HCT116 (cell line): ENCODE measurements at regions of chr12 and their contacts with region 1.

Region 1: DNA sequence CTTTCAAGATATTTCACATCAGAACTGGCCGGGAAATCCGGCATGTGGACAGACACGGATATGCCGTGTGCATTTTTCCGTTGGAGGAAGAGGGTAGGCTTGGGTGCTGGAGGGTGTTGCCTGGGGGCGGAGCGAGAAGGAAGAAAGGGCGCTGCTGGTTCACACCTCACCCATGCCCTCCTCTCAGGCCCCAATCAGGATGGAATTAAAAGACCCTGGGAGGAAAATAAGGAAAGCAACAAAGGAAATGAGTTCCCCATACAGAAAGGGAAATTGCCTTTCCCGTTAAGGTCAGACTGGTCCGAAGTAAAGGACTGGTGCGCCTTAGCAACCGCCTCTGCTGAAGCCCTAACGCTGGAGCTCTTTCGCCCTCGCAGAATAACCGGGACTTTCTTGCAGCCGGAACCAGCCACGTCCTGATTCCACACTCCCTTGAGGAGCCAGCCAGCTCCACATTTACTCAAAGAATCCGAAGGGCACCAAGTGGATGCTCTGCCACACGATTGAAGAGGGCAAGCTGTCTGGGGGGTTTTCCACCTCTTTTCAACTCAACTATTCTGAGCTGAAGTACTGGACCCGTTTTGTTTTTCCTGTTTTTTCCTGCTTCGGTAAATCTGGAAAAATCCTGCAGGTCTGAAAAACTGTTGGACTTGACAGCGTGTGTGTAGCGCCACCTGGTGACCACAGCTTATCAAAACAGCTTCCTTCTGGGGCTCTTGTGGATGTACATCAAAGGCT is 37.7 kb upstream of the BCL2L14 start:
- DNase-seq: peak; percentile 83
- ATAC-seq: peak; percentile 86
- H3K4me3 ChIP-seq: peak overlapping the region; percentile 11 to 13; a peak in 2 of 4 replicates
- H3K27ac ChIP-seq: no peak overlapping the region
- H3K4me1 ChIP-seq: peaks cover 0 to 6% of the 10 kb centered on the region in 2 experiments; a peak in 2 of 4 replicates
- H3K27me3 ChIP-seq: no peaks in the 10 kb centered on the region
- CTCF ChIP-seq: peak; percentile 81 to 91 (median 81)
- POLR2A ChIP-seq: no peak
- RAD21 ChIP-seq: peak; percentile 95

Region 2: DNA sequence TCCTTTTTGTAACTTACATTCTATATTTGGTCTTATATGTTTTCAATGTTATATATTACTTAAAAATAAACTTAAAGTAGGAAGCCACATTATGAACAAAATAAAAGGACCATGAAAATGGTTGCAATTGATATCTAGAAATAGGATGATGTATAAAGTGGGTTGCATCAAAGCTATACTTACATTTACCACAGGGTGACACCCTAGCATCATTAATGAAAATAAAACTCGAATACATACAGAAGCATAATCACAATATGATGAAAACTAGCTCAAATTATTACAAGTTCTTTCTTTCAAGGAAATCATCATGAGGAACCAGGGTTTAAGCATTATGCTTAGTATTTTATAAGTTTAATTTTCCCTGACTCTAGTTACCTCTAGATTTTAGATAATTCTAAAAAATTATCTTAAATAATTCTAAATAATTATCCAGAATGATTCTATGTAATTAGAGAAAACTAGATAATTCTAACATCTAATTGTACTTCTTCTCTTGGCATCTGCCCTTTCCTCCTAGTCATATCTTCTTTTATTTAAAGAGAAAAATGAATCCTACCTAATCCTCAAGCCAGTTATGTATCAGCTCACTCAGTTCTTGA is 1261.8 kb before region 1 on chr12:
- CTCF ChIA-PET with region 1: interaction called, 13 read pairs
- POLR2A ChIA-PET with region 1: no interaction called
- RAD21 ChIA-PET with region 1: interaction called in 1 of 2 experiments, 4 read pairs
- intact Hi-C with region 1: loop called (anchors 2 kb)
- DNase-seq: peak; percentile 26
- ATAC-seq: peak; percentile 68
- H3K4me3 ChIP-seq: no peak overlapping the region
- H3K27ac ChIP-seq: no peak overlapping the region
- H3K4me1 ChIP-seq: no peaks in the 10 kb centered on the region
- H3K27me3 ChIP-seq: peaks cover 29% of the 10 kb centered on the region
- CTCF ChIP-seq: peak; percentile 39 to 88 (median 71); a peak in 4 of 6 replicates
- POLR2A ChIP-seq: no peak
- RAD21 ChIP-seq: peak; percentile 85

Region 3: DNA sequence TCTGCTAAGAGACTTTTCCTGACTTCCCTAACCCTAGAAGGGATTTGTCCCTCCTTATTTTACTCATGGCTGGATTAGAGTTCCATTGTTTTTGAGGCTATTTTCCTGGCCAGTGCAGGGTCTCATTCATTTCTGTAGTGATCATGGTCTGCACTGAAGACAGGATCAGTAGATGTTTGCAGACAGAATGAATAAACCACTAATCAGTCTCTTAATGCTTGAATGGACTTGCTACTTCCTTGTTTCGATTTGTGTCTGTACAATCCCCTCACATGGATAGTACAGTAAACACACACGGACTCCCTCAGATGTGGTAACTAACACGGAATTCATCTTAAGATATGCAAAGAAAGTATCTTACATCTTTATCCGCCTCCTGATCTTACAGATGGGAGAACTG is 535.0 kb before region 1 on chr12:
- CTCF ChIA-PET with region 1: interaction called, 5 read pairs
- POLR2A ChIA-PET with region 1: no interaction called
- RAD21 ChIA-PET with region 1: no interaction called
- intact Hi-C with region 1: loop called (anchors 5 kb)
- DNase-seq: no peak
- ATAC-seq: no peak
- H3K4me3 ChIP-seq: no peak overlapping the region
- H3K27ac ChIP-seq: no peak overlapping the region
- H3K4me1 ChIP-seq: no peaks in the 10 kb centered on the region
- H3K27me3 ChIP-seq: peaks cover 19% of the 10 kb centered on the region; the same call in 1 of the 2 replicates
- CTCF ChIP-seq: no peak
- POLR2A ChIP-seq: no peak
- RAD21 ChIP-seq: no peak

Region 4: GRCh38 chr12:11553871-11554533 is 479.0 kb before region 1 on chr12:
- CTCF ChIA-PET with region 1: interaction called, 14 read pairs
- POLR2A ChIA-PET with region 1: no interaction called
- RAD21 ChIA-PET with region 1: interaction called in 1 of 2 experiments, 4 read pairs
- intact Hi-C with region 1: loop called (anchors 1 kb)
- DNase-seq: peak; percentile 56
- ATAC-seq: peak; percentile 88
- H3K4me3 ChIP-seq: no peak overlapping the region
- H3K27ac ChIP-seq: no peak overlapping the region
- H3K4me1 ChIP-seq: no peaks in the 10 kb centered on the region
- H3K27me3 ChIP-seq: peaks cover 44% of the 10 kb centered on the region
- CTCF ChIP-seq: peak; percentile 52 to 68 (median 64); a peak in 5 of 6 replicates
- POLR2A ChIP-seq: no peak
- RAD21 ChIP-seq: peak; percentile 61

Region 5: DNA sequence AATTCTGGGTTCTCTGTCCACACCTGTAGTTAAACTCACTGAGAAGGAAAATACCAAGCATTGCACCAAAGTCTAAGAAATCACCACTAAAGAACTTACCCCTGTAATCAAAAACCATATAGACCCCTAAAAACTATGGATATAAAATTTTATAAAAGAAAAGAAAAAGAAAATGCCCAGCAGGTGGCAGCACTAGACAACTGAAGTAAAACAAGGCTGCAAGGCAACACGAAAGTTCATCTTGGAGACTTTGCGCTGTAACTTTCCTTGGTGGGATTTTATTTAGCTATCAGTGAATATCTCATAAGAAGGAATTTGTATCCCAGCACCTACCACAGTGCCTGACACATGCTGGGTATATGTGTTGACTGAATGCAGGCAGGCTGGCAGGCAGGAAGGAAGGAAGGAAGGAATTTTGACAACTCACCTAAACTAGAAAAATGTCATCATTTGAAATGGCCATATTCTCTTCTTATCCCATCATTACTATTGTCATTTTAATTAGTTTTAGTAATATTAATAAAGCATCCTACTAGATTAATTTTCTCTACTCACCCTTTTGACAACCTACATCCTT is 451.8 kb before region 1 on chr12:
- CTCF ChIA-PET with region 1: interaction called, 88 read pairs
- POLR2A ChIA-PET with region 1: interaction called, 8 read pairs
- RAD21 ChIA-PET with region 1: interaction called, 8 read pairs
- intact Hi-C with region 1: loop called (anchors 1 kb)
- DNase-seq: peak; percentile 46
- ATAC-seq: peak; percentile 38; the same call in 1 of the 2 replicates
- H3K4me3 ChIP-seq: no peak overlapping the region
- H3K27ac ChIP-seq: no peak overlapping the region
- H3K4me1 ChIP-seq: peaks cover 0 to 2% of the 10 kb centered on the region in 2 experiments; a peak in 2 of 4 replicates
- H3K27me3 ChIP-seq: peaks cover 22% of the 10 kb centered on the region
- CTCF ChIP-seq: peak; percentile 18 to 80 (median 55); a peak in 4 of 6 replicates
- POLR2A ChIP-seq: no peak
- RAD21 ChIP-seq: peak; percentile 86

Region 6: GRCh38 chr12:11730299-11731041 is 302.6 kb before region 1 on chr12:
- CTCF ChIA-PET with region 1: no interaction called
- POLR2A ChIA-PET with region 1: no interaction called
- RAD21 ChIA-PET with region 1: no interaction called
- intact Hi-C with region 1: loop called (anchors 10 kb)
- DNase-seq: peak; percentile 12
- ATAC-seq: peak; percentile 63; the same call in 1 of the 2 replicates
- H3K4me3 ChIP-seq: no peak overlapping the region
- H3K27ac ChIP-seq: peak overlapping the region; percentile 48
- H3K4me1 ChIP-seq: peaks cover 33 to 34% of the 10 kb centered on the region in 2 experiments
- H3K27me3 ChIP-seq: no peaks in the 10 kb centered on the region
- CTCF ChIP-seq: no peak
- POLR2A ChIP-seq: no peak
- RAD21 ChIP-seq: no peak

Region 7: GRCh38 chr12:11922361-11922760 is 110.7 kb before region 1 on chr12:
- CTCF ChIA-PET with region 1: no interaction called
- POLR2A ChIA-PET with region 1: no interaction called
- RAD21 ChIA-PET with region 1: no interaction called
- intact Hi-C with region 1: no loop called
- DNase-seq: peak; percentile 24
- ATAC-seq: peak; percentile 50
- H3K4me3 ChIP-seq: no peak overlapping the region
- H3K27ac ChIP-seq: no peak overlapping the region
- H3K4me1 ChIP-seq: no peaks in the 10 kb centered on the region
- H3K27me3 ChIP-seq: peaks cover 33% of the 10 kb centered on the region; the same call in 1 of the 2 replicates
- CTCF ChIP-seq: no peak
- POLR2A ChIP-seq: no peak
- RAD21 ChIP-seq: no peak